ENCODE measurements at regions of chr5 and their contacts with region 1.

Region 1: DNA sequence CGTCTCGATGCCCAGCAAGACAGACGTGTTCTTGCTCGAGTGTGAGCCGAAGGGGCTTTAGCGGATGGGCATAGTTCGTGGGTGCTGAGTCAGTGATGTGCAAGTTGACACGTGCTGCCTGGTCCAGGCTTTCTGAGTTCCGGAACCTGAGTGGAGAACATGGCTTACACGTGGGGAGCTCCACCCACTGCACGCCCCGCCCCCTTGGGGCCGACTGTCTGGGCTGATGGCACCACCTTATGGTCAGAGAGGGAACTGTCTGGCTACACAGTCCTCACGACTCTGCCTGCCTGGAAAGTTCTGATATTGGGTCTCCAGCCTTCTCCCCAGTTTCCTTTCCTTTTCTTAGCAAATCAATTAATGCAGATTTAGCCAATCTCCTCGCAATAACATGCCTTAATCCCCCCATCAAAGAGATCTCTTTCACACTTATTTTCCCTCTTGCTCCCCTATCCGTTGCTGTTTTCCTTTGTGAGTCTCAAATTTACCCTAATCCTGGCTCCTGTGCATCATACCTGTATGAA is 3.8 kb upstream of the STC2 start:
- DNase-seq: peak; percentile 93
- H3K4me3 Mint-ChIP-seq: no peak overlapping the region
- H3K27ac Mint-ChIP-seq: peak overlapping the region; percentile 47
- H3K4me1 Mint-ChIP-seq: peaks cover 38% of the 10 kb centered on the region
- H3K27me3 Mint-ChIP-seq: peaks cover 46% of the 10 kb centered on the region

Region 2: DNA sequence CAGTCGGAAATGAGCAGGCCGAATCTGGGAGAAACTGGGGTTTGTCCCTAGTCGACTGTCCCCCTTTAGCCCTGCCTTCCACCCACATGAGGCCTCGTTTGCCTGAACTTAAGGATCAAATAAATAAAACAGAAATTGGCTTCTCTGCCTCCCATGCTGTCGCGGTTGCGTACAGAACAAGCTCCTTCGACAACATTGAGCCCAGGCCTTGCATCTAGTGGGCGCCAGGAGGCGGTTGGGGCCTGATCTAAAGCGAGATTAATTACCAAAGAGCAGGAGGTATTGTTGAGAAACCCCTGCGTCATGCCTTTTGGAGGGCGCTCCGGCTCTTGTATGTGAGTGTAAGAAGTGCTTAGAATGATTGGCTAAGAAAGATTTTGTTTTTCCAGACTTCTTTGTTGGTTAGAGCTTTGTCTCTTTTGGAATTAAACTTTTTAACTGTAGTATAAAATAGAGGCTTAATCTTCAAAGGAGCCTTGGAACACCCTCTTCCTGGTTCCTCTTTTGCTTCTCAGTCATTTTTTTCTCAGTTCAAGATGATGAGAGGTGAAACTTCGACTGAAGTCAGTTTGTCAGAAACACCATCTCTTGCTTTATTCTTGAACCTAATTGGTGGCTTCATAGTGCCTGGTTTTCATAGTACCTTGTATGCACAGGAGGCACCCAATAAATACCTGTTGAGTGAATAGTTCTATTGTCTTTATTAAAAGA is 347.6 kb before region 1 on chr5:
- CTCF ChIA-PET with region 1: interaction called, 23 read pairs
- DNase-seq: peak; percentile 84
- H3K4me3 Mint-ChIP-seq: peak overlapping the region; percentile 98
- H3K27ac Mint-ChIP-seq: peak overlapping the region; percentile 99
- H3K4me1 Mint-ChIP-seq: peaks cover 27% of the 10 kb centered on the region
- H3K27me3 Mint-ChIP-seq: no peaks in the 10 kb centered on the region

Region 3: DNA sequence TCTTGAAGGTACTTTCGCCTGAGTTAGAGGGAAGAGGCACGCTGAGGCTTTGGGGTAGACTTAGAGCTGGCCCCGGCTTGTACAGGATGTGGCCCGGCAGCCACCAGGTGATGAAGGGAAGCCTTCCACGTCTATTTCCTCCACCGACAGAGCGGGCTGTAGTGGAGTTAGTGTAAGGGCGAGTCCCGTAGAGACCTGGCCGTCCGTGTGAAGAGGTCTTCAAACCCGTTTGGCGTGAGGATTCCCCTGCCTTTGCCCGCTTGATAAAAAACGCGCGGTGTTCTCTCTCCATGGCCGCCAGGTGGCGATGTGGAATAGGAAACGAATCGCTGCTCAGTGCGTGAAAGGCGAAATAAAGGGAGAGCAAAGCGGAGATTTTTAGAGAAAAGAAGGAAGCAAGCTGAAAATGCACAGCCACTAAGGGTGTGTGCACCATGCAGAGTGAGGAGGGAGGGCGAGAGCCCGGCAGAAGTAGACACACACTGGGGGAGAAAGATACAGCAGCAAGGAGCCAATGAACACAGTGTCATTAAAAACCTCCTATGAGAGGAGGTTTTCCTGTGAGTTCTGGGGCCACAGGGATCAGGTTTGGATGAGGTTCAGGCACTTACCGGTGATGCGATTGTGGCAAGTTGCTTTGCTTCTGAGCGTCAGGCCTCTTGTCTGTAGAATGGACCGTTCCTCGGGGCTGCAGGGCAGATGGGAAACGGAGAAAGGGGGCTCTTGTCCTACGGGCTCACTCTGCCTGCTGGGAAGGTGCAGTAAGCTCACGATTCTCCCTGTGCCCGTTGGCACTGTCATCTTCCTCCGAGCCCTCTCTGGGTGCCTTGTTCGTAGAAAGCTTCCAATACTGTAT is 38.0 kb before region 1 on chr5:
- CTCF ChIA-PET with region 1: interaction called, 139 read pairs
- DNase-seq: peak; percentile 78
- H3K4me3 Mint-ChIP-seq: peak overlapping the region; percentile 4
- H3K27ac Mint-ChIP-seq: no peak overlapping the region
- H3K4me1 Mint-ChIP-seq: peaks cover 16% of the 10 kb centered on the region
- H3K27me3 Mint-ChIP-seq: peaks cover 89% of the 10 kb centered on the region

Region 4: GRCh38 chr5:173320259-173320658 is 11.8 kb before region 1 on chr5:
- CTCF ChIA-PET with region 1: interaction called, 17 read pairs
- DNase-seq: no peak
- H3K4me3 Mint-ChIP-seq: no peak overlapping the region
- H3K27ac Mint-ChIP-seq: no peak overlapping the region
- H3K4me1 Mint-ChIP-seq: peaks cover 21% of the 10 kb centered on the region
- H3K27me3 Mint-ChIP-seq: peaks cover 12% of the 10 kb centered on the region

Region 5: DNA sequence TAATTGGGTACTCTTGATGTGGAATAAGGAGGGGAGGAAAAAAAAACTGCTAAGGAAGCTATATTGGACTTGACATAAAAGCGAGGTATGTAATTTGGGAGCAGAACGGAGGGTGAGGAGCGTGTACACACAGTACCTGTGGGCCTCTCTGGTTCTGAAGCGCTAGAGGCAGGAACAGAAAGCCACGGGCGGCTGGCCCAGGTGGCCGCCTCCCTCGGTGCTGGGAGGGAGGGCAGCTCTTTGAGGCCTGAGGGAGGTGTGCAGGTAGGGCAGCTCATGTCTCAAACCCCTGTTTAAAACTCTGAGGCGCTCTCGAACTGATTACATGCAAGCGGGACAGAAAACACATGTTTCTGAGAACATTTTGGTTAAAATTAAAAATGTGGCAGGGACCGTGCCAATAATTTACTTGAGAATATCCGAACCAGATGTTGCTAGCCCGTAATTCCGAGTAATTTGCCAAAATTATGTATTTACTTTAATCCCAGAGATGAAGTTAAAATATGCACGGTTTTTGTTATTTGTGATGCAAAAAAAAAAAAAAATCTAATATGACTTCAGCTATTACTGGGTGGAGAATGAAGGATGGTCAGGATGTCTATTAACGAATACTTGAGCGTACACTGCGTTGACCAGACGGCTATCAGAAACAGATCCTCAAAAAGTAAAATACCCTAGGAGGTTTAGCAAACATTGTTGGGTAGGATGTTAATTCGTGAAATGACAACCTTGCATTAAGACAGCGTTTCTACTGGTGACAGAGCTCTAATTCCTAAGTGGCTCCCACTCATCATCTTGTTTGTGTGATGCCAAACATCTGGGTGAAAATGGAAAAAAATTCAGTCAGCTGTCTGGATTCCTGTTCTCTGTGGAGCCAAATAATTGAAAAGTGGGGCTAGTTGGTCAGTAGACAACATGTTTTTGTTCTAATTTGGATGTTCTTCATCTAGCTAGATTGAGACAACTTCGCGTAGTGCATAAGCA is 20.6 kb after region 1 on chr5:
- CTCF ChIA-PET with region 1: no interaction called
- DNase-seq: no peak
- H3K4me3 Mint-ChIP-seq: no peak overlapping the region
- H3K27ac Mint-ChIP-seq: no peak overlapping the region
- H3K4me1 Mint-ChIP-seq: no peaks in the 10 kb centered on the region
- H3K27me3 Mint-ChIP-seq: peaks cover 19% of the 10 kb centered on the region

Measured in activated naive CD4-positive, alpha-beta T cell treated with anti-CD3 and anti-CD28 coated beads, Interleukin-2, amount 10 ng/mL, durations not matched to agents 7 days and 5 days (primary cell).